Sigmoid colon (tissue), 7 donors: ENCODE measurements at regions of chr1 and their contacts with region 1.

Region 1: DNA sequence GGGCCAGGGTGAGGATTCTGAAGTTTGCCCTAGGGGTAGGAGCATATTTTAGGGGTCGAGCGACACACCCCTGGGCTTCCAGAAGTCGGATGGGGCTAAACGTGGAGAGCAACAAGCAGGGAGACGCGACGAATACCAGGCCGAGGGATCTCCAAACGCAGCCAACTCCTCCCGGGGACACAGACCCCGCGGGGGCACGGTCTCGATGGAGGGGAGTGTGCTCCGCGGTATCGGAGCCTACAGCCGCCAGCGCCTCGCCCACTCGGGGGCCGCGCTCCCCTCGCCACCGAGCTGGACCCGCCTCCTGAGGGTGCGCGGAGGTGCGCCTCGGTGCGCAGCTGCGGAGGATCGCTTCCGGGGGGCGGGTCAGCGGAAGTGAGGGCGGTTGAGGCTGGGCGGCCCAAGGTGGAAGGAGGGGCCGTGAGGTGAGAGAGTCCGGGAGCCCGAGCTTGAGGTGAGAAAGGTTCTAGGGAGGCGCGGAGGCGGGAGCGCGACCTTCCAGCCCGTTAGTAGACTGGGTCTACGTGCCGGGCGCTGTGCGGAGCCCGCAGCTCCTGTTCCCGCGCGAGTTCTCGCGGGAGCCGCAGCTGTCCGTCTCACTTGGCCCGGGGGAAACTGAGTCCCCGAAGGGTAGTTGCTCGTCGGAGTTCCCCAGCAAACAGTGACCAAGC is at the start of gene MTFR1L:
- DNase-seq: peak; percentile 92
- H3K4me3 ChIP-seq: peak within 1 kb of the TSS; percentile 78 to 97 (median 92)
- H3K27ac ChIP-seq: peak within 1 kb of the TSS; percentile 90 to 96 (median 91)
- H3K4me1 ChIP-seq: peaks cover 2 to 35% (median 29%) of the 10 kb centered on the region in 4 donors
- H3K27me3 ChIP-seq: no peaks in the 10 kb centered on the region
- CTCF ChIP-seq: no peak
- EP300 ChIP-seq: peak in 1 of 4 donors; percentile 18
- POLR2A ChIP-seq: peak; percentile 81 to 95
- total RNA-seq, gene MTFR1L: 106 to 150 (median 121) TPM

Region 2: DNA sequence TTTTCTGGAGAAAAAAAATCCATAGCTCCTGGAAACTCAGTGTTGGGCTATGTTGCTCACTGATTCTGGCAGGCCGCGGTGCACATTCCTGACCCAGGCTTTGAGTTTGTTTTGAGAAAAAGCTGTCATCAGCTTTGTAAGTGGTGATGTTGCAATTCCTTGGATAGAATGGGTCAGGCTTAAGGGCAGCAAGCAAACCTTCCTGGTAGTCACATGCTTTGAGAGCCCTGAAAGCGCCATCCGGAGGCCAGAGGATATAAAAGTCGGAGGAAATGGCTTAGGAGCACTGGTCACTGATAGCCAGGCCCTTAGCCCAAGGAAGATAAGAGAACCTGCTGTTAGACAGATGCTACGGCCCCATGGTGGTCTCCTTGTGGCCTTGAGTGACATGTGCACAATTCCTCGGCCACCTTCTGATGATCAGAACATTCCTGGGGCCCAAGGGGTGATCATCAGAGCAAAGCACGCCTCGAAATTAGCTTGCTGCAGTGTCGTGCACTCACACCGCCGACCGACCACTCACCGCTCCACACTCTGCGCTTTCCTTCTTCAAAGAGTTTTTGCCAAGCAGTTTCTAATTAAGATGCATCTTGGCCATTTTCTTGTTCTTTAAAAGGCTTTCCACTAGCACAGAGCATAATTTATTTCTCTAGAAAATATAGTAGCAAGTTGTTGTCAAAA is 124.5 kb before region 1 on chr1:
- intact Hi-C with region 1: no loop called
- DNase-seq: peak; percentile 94
- H3K4me3 ChIP-seq: no peak overlapping the region
- H3K27ac ChIP-seq: peak overlapping the region; percentile 81 to 90 (median 88)
- H3K4me1 ChIP-seq: peaks cover 0 to 73% (median 69%) of the 10 kb centered on the region in 4 donors
- H3K27me3 ChIP-seq: no peaks in the 10 kb centered on the region
- CTCF ChIP-seq: peak in 1 of 4 experiments; percentile 13
- EP300 ChIP-seq: peak in 2 of 4 donors; percentile 79 to 83
- POLR2A ChIP-seq: no peak

Region 3: DNA sequence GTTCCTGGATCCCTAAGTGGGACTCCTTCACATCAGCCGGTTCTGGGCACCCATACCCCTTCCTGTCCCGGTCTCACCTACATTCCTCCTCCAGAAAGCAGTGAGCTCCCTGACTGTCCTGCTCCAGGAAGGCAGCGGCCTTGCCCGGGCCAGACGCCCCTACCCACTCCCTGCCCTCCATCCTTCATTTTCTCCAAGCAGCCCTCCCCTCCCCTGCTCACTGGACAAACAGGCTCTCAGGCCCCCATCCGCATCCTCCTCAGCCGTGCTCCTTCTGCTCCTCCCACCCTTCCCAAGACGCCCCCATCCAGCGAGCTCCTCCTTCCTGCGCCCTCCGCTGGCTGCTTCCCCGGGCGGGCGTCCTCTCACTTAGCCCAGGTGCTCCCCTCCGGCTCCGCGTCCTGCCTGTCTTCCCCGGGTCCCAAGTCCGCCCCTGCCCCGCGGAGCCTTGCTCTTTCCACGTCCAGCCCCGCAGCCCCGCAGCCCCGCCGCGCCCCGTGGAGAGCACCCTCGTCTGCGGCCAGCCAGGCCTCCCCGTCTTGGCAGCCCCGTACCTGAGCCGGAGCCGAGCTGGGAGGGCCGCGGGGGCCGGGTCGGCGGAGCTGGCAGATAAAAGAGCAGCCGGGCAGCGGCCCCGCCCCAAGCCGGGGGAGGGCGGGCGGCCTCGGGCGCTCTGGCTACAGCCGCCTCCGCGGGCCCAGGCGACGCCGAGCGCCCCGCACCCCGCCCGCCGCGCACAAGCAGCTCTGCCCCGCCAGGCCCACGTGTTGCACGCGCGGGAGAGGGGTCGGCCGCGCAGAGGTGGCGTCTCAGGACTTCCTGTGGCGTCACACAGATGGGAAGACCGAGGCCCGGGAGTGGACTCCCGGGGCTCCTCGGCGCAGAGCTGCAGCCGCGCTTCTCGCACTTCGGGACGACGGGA is 55.5 kb after region 1 on chr1 and contains the start of gene PAQR7:
- intact Hi-C with region 1: loop called (anchors 1 kb)
- DNase-seq: peak; percentile 93
- H3K4me3 ChIP-seq: peak within 1 kb of the TSS; percentile 68 to 83 (median 73)
- H3K27ac ChIP-seq: peak within 1 kb of the TSS; percentile 83 to 86 (median 86)
- H3K4me1 ChIP-seq: peaks cover 0 to 43% (median 29%) of the 10 kb centered on the region in 4 donors
- H3K27me3 ChIP-seq: no peaks in the 10 kb centered on the region
- CTCF ChIP-seq: no peak
- EP300 ChIP-seq: no peak
- POLR2A ChIP-seq: peak; percentile 26 to 53
- total RNA-seq, gene PAQR7: 4.3 to 9.4 (median 6.4) TPM

Region 4: GRCh38 chr1:25904943-25905679 is 85.4 kb after region 1 on chr1:
- intact Hi-C with region 1: no loop called
- DNase-seq: peak; percentile 97
- H3K4me3 ChIP-seq: peak overlapping the region; percentile 61 to 75 (median 68)
- H3K27ac ChIP-seq: peak overlapping the region; percentile 76 to 79 (median 78)
- H3K4me1 ChIP-seq: peaks cover 0 to 29% (median 20%) of the 10 kb centered on the region in 4 donors
- H3K27me3 ChIP-seq: no peaks in the 10 kb centered on the region
- CTCF ChIP-seq: no peak
- EP300 ChIP-seq: no peak
- POLR2A ChIP-seq: no peak

Region 5: DNA sequence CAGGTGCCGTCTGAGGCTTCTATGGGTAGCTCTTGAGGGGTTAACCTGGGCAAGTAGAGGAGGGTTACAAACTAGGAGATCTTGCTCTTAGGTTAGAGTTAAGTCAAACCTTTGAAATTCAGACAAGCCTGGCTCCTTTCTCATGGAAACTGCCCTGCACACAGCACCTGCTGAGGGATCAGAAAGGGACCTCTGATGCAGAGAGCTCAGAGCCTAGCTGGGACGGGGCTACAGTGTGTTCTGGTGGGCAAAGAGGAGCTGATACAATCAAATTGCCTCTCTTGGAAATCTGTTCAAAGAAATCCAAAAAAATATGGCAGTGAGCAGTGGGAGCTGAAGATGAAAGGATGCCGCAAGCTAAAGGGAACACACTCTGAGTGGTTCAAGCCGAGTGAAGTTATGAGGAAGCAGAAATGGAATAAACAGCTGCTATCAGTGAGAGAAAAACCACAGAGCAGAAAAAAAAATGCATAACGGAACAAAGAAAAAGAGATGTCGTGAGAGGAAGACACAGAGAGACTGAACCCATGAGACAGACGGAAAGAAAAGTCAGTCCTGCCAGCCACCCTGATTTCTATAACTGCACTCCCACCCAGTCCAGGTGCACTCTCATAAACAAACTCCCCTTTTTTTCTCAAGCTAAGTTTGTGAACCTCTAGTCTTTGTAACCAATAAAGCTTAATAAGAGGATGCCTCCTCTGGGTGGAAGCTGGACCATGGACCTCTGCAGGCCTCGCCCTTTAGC is 151.5 kb after region 1 on chr1:
- intact Hi-C with region 1: no loop called
- DNase-seq: no peak
- H3K4me3 ChIP-seq: no peak overlapping the region
- H3K27ac ChIP-seq: no peak overlapping the region
- H3K4me1 ChIP-seq: peaks cover 0 to 18% (median 14%) of the 10 kb centered on the region in 4 donors
- H3K27me3 ChIP-seq: no peaks in the 10 kb centered on the region
- CTCF ChIP-seq: no peak
- EP300 ChIP-seq: no peak
- POLR2A ChIP-seq: no peak